Keratinocyte (primary cell): ENCODE measurements at regions of chr1 and their contacts with region 1.

Region 1: DNA sequence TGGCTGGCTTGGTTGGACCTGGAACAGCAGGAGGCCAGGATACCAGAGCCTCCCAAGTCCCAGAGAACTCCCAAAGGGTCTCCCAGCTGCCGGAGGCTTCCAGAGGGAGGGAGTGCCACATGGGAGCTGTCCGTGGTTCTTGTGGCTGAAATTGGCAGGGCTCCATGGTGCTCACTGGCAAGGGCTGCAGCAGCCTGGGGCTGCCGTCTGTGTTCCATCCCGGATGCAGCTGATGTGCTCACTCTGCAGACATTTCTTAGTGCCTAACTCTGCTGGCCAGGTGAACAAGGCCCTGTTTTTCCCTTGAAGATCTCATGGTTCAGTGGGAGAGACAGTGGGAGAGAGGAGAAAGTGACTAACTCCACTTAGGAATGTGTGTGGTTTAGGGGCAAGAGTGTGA is 261.1 kb downstream of the CAMTA1 start:
- DNase-seq: no peak
- H3K4me3 ChIP-seq: no peak overlapping the region
- H3K27ac ChIP-seq: no peak overlapping the region
- H3K4me1 ChIP-seq: no peaks in the 10 kb centered on the region
- H3K27me3 ChIP-seq: peaks cover 18% of the 10 kb centered on the region
- CTCF ChIP-seq: no peak

Region 2: DNA sequence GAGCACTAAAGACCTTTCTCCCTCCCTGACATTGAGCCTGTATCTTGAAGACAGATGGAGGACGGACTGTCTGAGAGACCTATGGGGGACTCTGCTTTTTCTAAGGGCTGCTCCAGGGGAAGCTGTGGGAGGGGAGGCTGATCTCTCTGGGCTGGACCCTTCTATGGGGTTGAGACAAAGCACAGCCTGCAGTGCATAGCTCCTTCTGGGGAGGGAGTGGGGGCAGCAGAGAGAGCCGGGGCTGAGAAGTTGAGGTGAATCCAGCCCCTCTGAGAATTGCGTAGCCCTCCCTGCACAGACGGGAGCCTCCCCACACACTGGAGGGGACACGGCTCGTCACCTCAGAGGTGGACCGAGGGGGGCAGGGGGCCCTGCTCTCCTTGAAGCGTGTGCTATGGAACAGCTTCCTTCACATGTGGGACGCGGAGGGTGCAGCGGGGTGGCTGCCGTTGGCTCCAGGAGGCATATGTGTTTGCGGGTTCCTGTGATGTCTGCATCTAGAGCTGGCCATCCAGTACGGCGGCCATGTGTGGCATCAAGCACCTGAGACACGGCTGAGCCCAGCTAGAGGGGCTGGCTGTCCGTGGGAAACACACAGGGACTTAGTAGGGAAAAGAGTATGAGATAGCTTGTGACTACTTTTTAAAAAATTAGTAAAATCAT is 38.0 kb after region 1 on chr1:
- dilution Hi-C with region 1: loop called (anchors 5 kb)
- DNase-seq: no peak
- H3K4me3 ChIP-seq: no peak overlapping the region
- H3K27ac ChIP-seq: no peak overlapping the region
- H3K4me1 ChIP-seq: no peaks in the 10 kb centered on the region
- H3K27me3 ChIP-seq: peaks cover 18% of the 10 kb centered on the region
- CTCF ChIP-seq: no peak